ENCODE measurements at regions of chr1 and their contacts with region 1.

Region 1: DNA sequence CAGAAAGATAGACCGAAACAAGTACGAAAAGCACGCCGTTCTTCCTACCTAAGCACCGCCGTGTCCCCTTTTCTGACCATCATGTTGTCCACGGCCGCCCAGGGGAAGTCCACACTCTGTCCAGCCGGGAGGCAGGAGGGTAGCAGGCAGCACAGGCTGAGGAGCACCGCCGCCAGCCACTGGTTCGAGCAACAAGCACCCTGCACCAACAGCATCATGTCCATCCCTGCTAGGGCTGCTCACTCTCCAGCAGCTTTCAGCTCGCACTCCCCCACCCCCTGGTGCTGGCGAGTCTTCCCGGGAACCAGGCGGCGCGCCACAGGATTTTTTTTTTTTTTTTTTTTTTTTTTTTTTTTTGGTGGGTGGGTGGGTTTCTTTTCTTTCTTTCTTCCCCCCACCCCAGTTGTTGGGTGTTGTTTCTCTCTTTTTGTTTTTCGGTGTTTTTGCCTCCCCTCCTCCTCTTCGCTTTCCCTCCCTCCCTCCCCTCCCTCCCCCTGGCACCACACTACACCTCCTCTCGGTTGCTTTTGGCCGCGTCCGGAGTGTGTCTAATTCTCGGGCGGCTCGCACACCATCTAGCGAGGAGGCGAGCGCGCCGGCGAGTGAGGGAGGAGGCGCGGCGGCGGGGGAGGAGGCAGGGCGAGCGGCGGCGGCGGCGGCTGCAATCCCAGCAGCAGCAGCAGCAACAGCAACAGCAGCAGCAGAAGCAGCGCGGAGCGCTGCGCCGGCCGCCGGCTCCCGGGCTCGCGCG is at the start of gene NEGR1:
- DNase-seq: peak; percentile 93
- H3K4me3 ChIP-seq: peak within 1 kb of the TSS; percentile 75 to 91 (median 78)
- H3K27ac ChIP-seq: peak within 1 kb of the TSS; percentile 96
- H3K4me1 ChIP-seq: peaks cover 54% of the 10 kb centered on the region
- H3K27me3 ChIP-seq: no peaks in the 10 kb centered on the region
- CTCF ChIP-seq: no peak
- POLR2A ChIP-seq: no peak
- total RNA-seq, gene NEGR1: 20.2 and 21.8 TPM in 2 replicates

Region 2: GRCh38 chr1:71196685-71197084 is 1085.8 kb before region 1 on chr1:
- CTCF ChIA-PET with region 1: no interaction called
- POLR2A ChIA-PET with region 1: no interaction called
- dilution Hi-C with region 1: no loop called
- intact Hi-C with region 1: loop called (anchors 10 kb)
- DNase-seq: peak; percentile 16
- H3K4me3 ChIP-seq: no peak overlapping the region
- H3K27ac ChIP-seq: no peak overlapping the region
- H3K4me1 ChIP-seq: no peaks in the 10 kb centered on the region
- H3K27me3 ChIP-seq: no peaks in the 10 kb centered on the region
- CTCF ChIP-seq: peak in 1 of 2 donors; percentile 8
- POLR2A ChIP-seq: no peak

Region 3: GRCh38 chr1:72037745-72038343 is 244.6 kb before region 1 on chr1:
- CTCF ChIA-PET with region 1: interaction called, 7 read pairs
- POLR2A ChIA-PET with region 1: no interaction called
- dilution Hi-C with region 1: no loop called
- intact Hi-C with region 1: loop called (anchors 2 kb)
- DNase-seq: peak; percentile 47
- H3K4me3 ChIP-seq: no peak overlapping the region
- H3K27ac ChIP-seq: no peak overlapping the region
- H3K4me1 ChIP-seq: no peaks in the 10 kb centered on the region
- H3K27me3 ChIP-seq: no peaks in the 10 kb centered on the region
- CTCF ChIP-seq: peak; percentile 38 to 46
- POLR2A ChIP-seq: no peak

Region 4: GRCh38 chr1:72186733-72187307 is 95.6 kb before region 1 on chr1:
- CTCF ChIA-PET with region 1: interaction called, 10 read pairs
- POLR2A ChIA-PET with region 1: no interaction called
- dilution Hi-C with region 1: no loop called
- intact Hi-C with region 1: loop called (anchors 1 kb)
- DNase-seq: peak; percentile 51
- H3K4me3 ChIP-seq: no peak overlapping the region
- H3K27ac ChIP-seq: no peak overlapping the region
- H3K4me1 ChIP-seq: no peaks in the 10 kb centered on the region
- H3K27me3 ChIP-seq: no peaks in the 10 kb centered on the region
- CTCF ChIP-seq: peak; percentile 25 to 48
- POLR2A ChIP-seq: no peak

Region 5: GRCh38 chr1:72435025-72435424 is 152.6 kb after region 1 on chr1:
- CTCF ChIA-PET with region 1: no interaction called
- POLR2A ChIA-PET with region 1: no interaction called
- dilution Hi-C with region 1: no loop called
- intact Hi-C with region 1: loop called (anchors 5 kb)
- DNase-seq: no peak
- H3K4me3 ChIP-seq: no peak overlapping the region
- H3K27ac ChIP-seq: no peak overlapping the region
- H3K4me1 ChIP-seq: peaks cover 18% of the 10 kb centered on the region
- H3K27me3 ChIP-seq: no peaks in the 10 kb centered on the region
- CTCF ChIP-seq: no peak
- POLR2A ChIP-seq: no peak

Region 6: GRCh38 chr1:72662918-72663317 is 380.5 kb after region 1 on chr1:
- CTCF ChIA-PET with region 1: no interaction called
- POLR2A ChIA-PET with region 1: no interaction called
- dilution Hi-C with region 1: no loop called
- intact Hi-C with region 1: no loop called
- DNase-seq: peak; percentile 36
- H3K4me3 ChIP-seq: no peak overlapping the region
- H3K27ac ChIP-seq: no peak overlapping the region
- H3K4me1 ChIP-seq: peaks cover 4% of the 10 kb centered on the region
- H3K27me3 ChIP-seq: no peaks in the 10 kb centered on the region
- CTCF ChIP-seq: no peak
- POLR2A ChIP-seq: no peak

Region 7: GRCh38 chr1:72845342-72845741 is 562.9 kb after region 1 on chr1:
- CTCF ChIA-PET with region 1: interaction called, 4 read pairs
- POLR2A ChIA-PET with region 1: no interaction called
- dilution Hi-C with region 1: no loop called
- intact Hi-C with region 1: loop called (anchors 10 kb)
- DNase-seq: peak; percentile 31
- H3K4me3 ChIP-seq: no peak overlapping the region
- H3K27ac ChIP-seq: no peak overlapping the region
- H3K4me1 ChIP-seq: no peaks in the 10 kb centered on the region
- H3K27me3 ChIP-seq: no peaks in the 10 kb centered on the region
- CTCF ChIP-seq: peak; percentile 21 to 39
- POLR2A ChIP-seq: no peak

Region 8: DNA sequence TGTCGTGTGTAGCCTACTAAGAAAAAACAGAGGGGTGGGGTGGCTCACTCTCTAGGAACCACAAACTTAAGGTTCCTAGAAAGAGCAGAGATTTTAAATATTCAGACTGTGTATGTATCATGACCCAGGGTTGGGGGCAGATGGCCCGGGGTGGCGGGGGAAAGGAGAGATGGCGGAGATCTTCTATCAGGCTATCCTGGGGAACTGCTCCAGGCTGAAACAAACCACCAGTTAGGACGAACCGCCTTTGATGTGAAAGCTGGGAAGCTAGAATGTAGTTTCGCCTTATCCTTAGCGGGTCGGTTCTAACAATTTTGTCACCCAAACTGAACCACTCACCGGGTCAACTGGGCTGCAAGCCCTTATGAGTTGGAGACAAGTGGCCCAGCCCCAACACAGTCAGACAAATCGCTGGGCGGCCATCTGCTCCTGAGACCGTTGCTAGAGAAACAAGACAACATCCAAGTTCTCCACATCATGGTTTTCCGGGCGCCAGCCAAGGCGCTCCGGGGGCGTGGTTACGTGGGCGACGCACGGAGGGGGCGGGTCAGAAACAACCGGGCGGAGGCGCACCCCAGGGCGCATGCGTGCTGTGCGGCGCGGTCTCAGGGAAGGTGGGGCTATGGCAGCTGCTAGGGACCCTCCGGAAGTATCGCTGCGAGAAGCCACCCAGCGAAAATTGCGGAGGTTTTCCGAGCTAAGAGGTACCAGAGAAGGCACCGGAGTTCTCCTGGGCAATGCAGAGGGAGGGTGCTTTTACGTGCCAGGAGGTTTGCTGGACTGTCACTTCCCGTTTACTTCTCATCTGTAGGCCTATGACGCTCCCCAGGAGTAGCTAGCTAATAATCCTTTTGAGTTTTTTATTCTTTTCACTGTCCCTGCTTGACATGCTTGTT is 1915.5 kb after region 1 on chr1 and contains the starts of genes FPGT and LRRIQ3:
- CTCF ChIA-PET with region 1: no interaction called
- POLR2A ChIA-PET with region 1: no interaction called
- dilution Hi-C with region 1: no loop called
- intact Hi-C with region 1: loop called (anchors 10 kb)
- DNase-seq: peak; percentile 98
- H3K4me3 ChIP-seq: peak within 1 kb of the TSS; percentile 67 to 91 (median 91)
- H3K27ac ChIP-seq: peak within 1 kb of the TSS; percentile 76
- H3K4me1 ChIP-seq: peaks cover 10% of the 10 kb centered on the region
- H3K27me3 ChIP-seq: no peaks in the 10 kb centered on the region
- CTCF ChIP-seq: no peak
- POLR2A ChIP-seq: peak; percentile 95
- total RNA-seq, gene FPGT: 10.9 and 11.1 TPM in 2 replicates
- total RNA-seq, gene LRRIQ3: 0.72 and 1.1 TPM in 2 replicates

Measured in endothelial cell of umbilical vein (primary cell).